ENCODE measurements at regions of chr10 and their contacts with region 1.

Region 1: GRCh38 chr10:110354322-110354766 is 49.6 kb upstream of the SMNDC1 start:
- DNase-seq: peak; percentile 90
- H3K4me3 Mint-ChIP-seq: peak overlapping the region; percentile 6
- H3K27ac Mint-ChIP-seq: peak overlapping the region; percentile 70
- H3K4me1 Mint-ChIP-seq: peaks cover 61% of the 10 kb centered on the region
- H3K27me3 Mint-ChIP-seq: peaks cover 15% of the 10 kb centered on the region

Region 2: GRCh38 chr10:110326351-110327032 is 27.9 kb before region 1 on chr10:
- CTCF ChIA-PET with region 1: interaction called, 15 read pairs
- DNase-seq: no peak
- H3K4me3 Mint-ChIP-seq: no peak overlapping the region
- H3K27ac Mint-ChIP-seq: no peak overlapping the region
- H3K4me1 Mint-ChIP-seq: peaks cover 3% of the 10 kb centered on the region
- H3K27me3 Mint-ChIP-seq: peaks cover 33% of the 10 kb centered on the region

Region 3: GRCh38 chr10:110364531-110364937 is 10.2 kb after region 1 on chr10:
- CTCF ChIA-PET with region 1: interaction called, 18 read pairs
- DNase-seq: no peak
- H3K4me3 Mint-ChIP-seq: no peak overlapping the region
- H3K27ac Mint-ChIP-seq: no peak overlapping the region
- H3K4me1 Mint-ChIP-seq: peaks cover 25% of the 10 kb centered on the region
- H3K27me3 Mint-ChIP-seq: peaks cover 10% of the 10 kb centered on the region

Region 4: DNA sequence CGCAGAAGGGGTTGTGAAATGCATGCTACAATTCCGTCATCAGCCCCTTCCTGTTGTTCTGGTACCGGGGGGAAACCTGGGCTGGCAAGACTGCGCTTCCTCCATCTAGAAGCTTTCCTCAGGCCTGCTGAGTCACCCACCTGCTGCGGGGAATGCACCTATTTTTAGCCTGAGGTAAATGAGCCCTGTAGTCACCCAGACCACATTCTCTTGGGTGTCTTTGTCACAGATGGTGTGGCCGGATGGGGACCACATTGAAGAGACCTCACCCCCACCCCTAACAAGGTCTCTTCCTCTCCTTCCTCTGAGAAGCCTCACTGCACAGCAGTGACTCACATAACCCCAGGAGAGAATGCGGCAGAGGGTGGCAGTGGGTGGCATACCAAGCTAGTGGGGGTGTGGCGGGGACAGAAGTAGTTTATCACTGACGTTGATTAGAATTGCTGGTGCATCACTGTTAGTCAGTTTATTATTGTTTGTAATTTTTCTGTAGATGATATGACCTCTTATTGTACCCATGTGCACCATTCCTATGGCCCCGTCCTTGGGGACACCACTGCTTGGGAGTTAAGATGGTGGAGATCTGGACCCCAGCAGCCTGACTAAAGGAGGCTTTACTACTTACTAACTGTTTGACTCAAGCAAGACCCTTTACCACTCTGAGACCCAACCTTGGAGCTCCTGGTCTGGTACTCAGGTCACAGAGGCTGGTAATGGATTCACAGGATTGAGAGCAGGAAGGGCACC is 60.4 kb after region 1 on chr10:
- CTCF ChIA-PET with region 1: interaction called, 21 read pairs
- DNase-seq: peak; percentile 92
- H3K4me3 Mint-ChIP-seq: peak overlapping the region; percentile 13
- H3K27ac Mint-ChIP-seq: peak overlapping the region; percentile 88
- H3K4me1 Mint-ChIP-seq: peaks cover 56% of the 10 kb centered on the region
- H3K27me3 Mint-ChIP-seq: peaks cover 18% of the 10 kb centered on the region

Region 5: DNA sequence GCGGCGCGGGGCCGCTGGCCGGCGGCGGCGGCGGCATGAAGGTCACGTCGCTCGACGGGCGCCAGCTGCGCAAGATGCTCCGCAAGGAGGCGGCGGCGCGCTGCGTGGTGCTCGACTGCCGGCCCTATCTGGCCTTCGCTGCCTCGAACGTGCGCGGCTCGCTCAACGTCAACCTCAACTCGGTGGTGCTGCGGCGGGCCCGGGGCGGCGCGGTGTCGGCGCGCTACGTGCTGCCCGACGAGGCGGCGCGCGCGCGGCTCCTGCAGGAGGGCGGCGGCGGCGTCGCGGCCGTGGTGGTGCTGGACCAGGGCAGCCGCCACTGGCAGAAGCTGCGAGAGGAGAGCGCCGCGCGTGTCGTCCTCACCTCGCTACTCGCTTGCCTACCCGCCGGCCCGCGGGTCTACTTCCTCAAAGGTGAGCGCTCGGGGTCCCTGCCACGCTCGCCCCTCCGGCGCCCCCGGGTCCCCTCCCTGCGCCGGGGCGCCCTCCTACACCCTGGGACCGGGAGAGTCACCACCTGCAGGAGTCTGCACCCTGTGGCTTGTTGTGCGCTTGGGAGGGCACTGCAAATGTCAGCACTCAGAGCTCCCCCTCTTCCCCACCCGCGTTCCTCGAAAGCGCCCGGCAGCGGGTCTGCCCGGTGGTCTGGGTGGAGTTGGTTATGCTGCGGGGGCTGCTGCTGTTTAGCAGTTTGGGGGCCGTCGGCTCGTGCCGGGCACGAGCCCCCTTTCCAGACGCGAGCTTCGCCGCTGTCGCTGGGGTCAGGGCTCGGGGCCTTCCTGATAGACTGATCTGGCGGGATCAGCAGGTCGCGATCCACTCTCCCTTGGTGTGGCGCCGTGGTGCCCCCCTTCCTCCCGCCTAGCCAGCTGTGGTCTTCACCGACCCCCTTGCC is 144.0 kb after region 1 on chr10:
- CTCF ChIA-PET with region 1: interaction called, 122 read pairs
- DNase-seq: peak; percentile 76
- H3K4me3 Mint-ChIP-seq: peak overlapping the region; percentile 98
- H3K27ac Mint-ChIP-seq: peak overlapping the region; percentile 90
- H3K4me1 Mint-ChIP-seq: peaks cover 61% of the 10 kb centered on the region
- H3K27me3 Mint-ChIP-seq: peaks cover 9% of the 10 kb centered on the region

Region 6: GRCh38 chr10:110535958-110536891 is 181.9 kb after region 1 on chr10:
- CTCF ChIA-PET with region 1: interaction called, 23 read pairs
- DNase-seq: peak; percentile 68
- H3K4me3 Mint-ChIP-seq: no peak overlapping the region
- H3K27ac Mint-ChIP-seq: peak overlapping the region; percentile 53
- H3K4me1 Mint-ChIP-seq: peaks cover 45% of the 10 kb centered on the region
- H3K27me3 Mint-ChIP-seq: peaks cover 33% of the 10 kb centered on the region